Mucosa of descending colon (tissue), 3 donors: ENCODE measurements at regions of chr16 and their contacts with region 1.

Region 1: DNA sequence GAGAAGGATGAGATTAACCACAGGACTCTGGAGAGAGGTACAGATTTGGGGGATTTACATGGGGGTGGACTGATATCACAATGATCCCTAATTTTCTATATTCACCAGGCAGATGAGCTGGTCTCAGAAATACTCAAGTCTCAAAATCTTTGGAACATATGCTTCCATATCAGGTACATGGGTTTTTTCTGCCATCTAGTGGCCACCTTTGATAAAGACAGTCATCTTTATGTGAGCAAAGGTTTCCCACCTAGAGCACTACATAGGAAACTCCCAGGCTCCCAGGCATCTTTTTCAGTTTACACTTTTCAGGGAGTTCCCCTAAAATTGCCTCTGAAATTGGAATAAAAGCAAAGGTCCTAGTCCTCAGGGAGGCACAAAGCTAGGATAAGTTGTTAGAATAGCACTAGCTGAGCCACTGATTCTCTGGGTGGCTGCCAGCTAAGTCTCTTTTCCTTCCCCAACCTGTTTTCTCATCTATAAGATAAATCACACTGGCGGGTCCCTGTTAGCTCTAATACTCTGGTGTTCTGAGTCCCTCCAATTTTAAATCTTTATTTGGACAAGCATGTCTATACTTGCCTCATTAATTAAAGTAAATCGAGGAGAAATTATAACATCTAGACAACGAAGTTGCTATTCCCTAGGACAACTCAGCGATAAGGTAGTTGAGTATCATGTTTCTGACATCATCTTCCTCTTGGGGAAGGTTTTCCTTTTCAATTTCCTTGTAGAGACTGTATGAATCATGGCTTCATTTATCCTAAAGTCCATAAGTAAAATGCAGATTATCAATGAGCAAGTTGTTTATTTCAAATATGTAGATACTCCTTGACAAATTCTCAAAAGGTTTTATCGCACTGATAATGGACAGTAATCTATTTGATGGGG is 19.0 kb upstream of the MON1B start:
- DNase-seq: peak in 1 of 3 donors; percentile 69
- ATAC-seq: peak; percentile 64
- H3K4me3 ChIP-seq: no peak overlapping the region
- H3K4me1 ChIP-seq: no peaks in the 10 kb centered on the region
- CTCF ChIP-seq: peak; percentile 25

Region 2: DNA sequence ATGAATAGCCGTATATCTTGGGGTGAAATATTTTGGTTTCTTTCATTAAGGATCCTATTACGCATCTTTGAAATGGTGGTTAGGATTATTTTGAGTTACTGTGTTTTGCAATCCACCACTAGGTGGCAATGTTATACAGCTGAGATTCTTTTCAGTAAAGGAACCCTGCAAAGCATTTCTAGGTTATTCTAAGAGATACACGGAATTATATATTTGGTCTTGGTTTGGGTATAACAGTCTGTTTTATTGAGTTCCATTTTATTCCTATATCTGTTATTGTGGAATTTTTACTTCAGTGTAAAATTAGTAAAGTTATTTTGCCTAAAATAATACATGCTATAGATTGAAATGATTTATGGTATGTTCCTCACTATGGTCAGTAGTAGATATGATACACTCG is 1382.8 kb before region 1 on chr16:
- intact Hi-C with region 1: loop called (anchors 5 to 10 kb)
- DNase-seq: peak in 1 of 3 donors; percentile 47
- ATAC-seq: peak; percentile 58
- H3K4me3 ChIP-seq: no peak overlapping the region
- H3K4me1 ChIP-seq: no peaks in the 10 kb centered on the region
- CTCF ChIP-seq: peak; percentile 34

Region 3: DNA sequence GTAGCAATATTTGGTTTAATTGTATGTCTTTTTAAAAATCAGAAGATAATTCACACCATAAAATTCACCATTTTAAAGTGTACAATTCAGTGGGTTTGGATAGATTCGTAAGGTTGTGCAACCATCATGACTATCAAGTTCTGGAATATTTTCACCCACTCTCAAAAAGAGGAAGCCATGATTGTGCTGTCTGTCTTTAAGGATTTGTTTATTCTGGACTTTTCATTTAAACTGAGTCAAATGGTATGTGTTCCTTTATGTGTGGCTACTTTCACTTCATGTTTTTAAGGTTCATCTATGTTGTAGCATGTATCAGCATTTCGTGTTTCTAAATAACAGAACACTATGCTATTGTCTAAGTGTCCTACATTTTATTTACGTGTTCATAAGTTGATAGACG is 1377.6 kb before region 1 on chr16:
- intact Hi-C with region 1: loop called (anchors 5 to 10 kb)
- DNase-seq: no peak
- ATAC-seq: no peak
- H3K4me3 ChIP-seq: no peak overlapping the region
- H3K4me1 ChIP-seq: no peaks in the 10 kb centered on the region
- CTCF ChIP-seq: no peak